ENCODE measurements at regions of chr20 and their contacts with region 1.

Region 1: GRCh38 chr20:5353624-5354496 is 37.1 kb upstream of the PROKR2 start:
- DNase-seq: no peak
- H3K4me3 Mint-ChIP-seq: no peak overlapping the region
- H3K27ac Mint-ChIP-seq: peak overlapping the region; percentile 65
- H3K4me1 Mint-ChIP-seq: peaks cover 5% of the 10 kb centered on the region
- H3K27me3 Mint-ChIP-seq: peaks cover 1% of the 10 kb centered on the region

Region 2: DNA sequence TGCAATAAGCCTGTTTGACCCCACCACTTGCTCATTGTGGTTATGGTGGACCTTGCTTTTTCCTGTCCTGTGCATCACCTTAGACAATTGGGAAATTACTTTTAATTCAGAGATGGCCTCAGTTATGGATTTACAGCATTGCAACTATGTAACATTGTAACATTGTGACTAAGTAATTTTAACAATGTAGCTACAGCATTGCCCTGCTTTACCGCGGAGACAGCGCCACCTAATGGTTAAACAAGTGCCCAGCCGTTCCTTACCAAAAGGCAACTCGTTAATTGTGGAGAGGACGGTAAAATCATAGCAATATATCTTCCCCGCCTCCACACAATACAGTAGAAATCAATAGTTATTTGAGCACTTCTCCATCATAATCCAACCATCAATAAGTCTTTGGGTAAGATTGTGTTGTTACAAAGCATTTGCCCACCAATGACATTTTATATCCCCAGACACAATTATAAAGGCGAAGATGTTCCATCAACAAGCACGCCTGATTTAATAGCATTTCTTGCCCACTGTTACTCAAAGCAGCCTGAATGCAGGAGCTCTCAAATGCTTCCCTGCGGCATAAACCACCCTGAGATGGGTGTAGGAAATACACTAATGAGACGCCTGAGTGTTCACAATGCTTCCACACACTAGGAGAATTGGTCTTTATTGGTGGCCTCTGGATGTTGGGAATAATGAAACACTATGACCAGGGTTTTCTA is 130.8 kb before region 1 on chr20:
- intact Hi-C with region 1: no loop called
- DNase-seq: peak; percentile 30
- H3K4me3 Mint-ChIP-seq: no peak overlapping the region
- H3K27ac Mint-ChIP-seq: no peak overlapping the region
- H3K4me1 Mint-ChIP-seq: no peaks in the 10 kb centered on the region
- H3K27me3 Mint-ChIP-seq: no peaks in the 10 kb centered on the region

Region 3: DNA sequence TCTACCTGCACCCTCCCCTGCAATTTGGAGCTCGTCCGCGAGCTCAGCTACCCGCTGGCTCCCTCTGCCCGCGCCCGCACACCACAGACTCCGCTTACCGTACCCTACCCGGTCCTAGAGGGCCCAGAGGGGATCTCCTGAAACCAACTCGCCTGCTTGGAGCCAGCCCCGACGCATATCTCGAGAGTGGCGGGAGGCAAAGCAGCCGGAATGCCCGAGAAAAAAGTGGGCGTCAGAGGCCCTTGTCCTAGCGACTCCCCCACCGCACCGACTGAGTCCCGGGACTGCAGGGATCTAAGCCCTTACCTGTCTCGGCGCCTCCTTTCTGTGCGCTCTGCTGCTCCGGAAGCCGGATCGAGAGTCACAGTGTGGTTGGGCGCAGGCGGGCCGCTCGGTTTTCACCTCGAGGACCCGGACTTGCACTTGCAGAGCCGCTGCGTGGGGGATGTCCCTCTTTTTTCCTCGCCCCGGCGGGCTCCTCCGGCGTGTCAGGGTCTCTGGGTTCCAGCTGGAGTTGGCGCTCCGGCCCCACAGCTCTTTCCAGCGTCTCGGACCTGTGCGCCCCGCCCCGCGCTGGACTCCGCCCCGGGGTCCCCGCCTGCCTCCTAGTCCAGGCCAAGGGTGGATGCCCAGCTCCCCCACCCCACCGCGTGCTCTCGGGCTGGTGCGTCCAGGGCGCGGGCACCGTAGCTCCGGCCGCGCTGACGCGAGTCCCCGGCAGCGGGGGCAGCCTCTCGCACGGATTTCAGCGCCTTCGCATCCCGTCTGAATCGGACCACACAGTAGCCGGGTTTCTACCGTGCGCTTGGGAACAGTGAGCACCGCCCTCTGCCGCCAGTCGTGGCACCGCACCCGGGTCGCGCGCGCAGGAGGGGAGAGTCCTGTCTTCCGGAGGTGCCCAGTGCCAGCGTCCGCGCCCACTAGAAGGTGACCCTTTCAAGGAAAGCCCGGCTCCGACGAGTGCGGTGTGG is 37.4 kb before region 1 on chr20 and contains the start of gene PROKR2:
- intact Hi-C with region 1: no loop called
- DNase-seq: no peak
- H3K4me3 Mint-ChIP-seq: no peak within 1 kb of the TSS
- H3K27ac Mint-ChIP-seq: no peak within 1 kb of the TSS
- H3K4me1 Mint-ChIP-seq: no peaks in the 10 kb centered on the region
- H3K27me3 Mint-ChIP-seq: peaks cover 46% of the 10 kb centered on the region
- total RNA-seq, gene PROKR2: not detected in 2 replicates

Region 4: DNA sequence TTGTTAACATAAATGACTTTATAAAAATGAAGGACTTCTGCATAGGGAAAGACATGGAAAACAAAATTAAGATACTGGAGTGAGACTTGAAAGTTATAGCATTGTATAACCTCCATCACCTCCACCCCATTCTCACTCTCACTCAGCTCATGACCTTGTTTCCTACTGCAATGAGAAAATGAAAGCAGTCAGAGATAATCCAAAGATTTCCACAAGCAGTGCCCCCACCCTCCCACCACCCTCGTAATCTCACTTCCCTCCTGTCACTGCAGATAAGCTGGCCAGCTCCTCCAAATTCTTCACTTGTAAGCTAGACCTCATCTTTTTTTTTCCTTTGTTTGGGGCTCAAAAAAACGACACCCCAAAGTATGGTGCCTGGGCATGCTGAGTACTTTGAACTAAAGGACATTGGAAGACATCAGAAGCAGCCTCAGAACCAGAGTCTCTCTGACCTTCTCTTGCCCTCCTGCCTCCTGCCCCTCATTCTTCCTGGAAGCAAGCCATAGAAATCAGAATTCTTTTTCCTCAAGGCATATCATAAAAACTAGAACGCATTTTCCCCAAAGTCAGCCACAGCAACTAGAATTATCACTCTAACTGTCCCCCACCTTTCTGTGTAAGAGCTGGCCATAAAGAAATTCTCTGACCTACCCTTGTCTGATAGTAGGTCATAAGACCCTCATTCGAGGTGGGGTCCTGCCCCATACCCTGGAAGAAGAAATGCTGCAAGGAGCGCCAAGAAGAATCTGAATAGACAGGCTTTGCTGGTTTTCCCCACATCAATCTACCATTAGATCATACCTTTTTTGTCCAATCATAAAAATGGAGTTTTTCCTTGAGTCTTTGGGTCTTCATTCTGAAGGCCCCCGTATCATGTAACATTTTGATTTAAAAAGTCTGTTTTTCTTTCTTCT is 16.0 kb after region 1 on chr20:
- intact Hi-C with region 1: loop called (anchors 2 kb)
- DNase-seq: no peak
- H3K4me3 Mint-ChIP-seq: no peak overlapping the region
- H3K27ac Mint-ChIP-seq: no peak overlapping the region
- H3K4me1 Mint-ChIP-seq: peaks cover 8% of the 10 kb centered on the region
- H3K27me3 Mint-ChIP-seq: peaks cover 2% of the 10 kb centered on the region

Region 5: GRCh38 chr20:5416086-5416485 is 62.2 kb after region 1 on chr20:
- intact Hi-C with region 1: no loop called
- DNase-seq: no peak
- H3K4me3 Mint-ChIP-seq: no peak overlapping the region
- H3K27ac Mint-ChIP-seq: no peak overlapping the region
- H3K4me1 Mint-ChIP-seq: no peaks in the 10 kb centered on the region
- H3K27me3 Mint-ChIP-seq: peaks cover 2% of the 10 kb centered on the region

Measured in activated T-helper 1 cell treated with anti-CD3 and anti-CD28 coated beads, Interleukin-12 subunit alpha, Interleukin-12 subunit beta, Interleukin-2, Interleukin-4 antibody, amounts not matched to agents 30 ng/mL and 10 ng/mL and 1 ng/mL, durations not matched to agents 14 hours and 24 hours and 36 hours (primary cell).